Endothelial cell of umbilical vein (primary cell): ENCODE measurements at regions of chr2 and their contacts with region 1.

Region 1: GRCh38 chr2:181585732-181586131 is 71.2 kb downstream of the CERKL start:
- DNase-seq: no peak
- H3K4me3 ChIP-seq: no peak overlapping the region
- H3K27ac ChIP-seq: no peak overlapping the region
- H3K4me1 ChIP-seq: no peaks in the 10 kb centered on the region
- H3K27me3 ChIP-seq: peaks cover 0 to 4% of the 10 kb centered on the region in 2 experiments
- CTCF ChIP-seq: no peak
- POLR2A ChIP-seq: no peak

Region 2: GRCh38 chr2:181573140-181573736 is 12.5 kb before region 1 on chr2:
- CTCF ChIA-PET with region 1: interaction called, 12 read pairs
- POLR2A ChIA-PET with region 1: no interaction called
- dilution Hi-C with region 1: no loop called
- intact Hi-C with region 1: no loop called
- DNase-seq: peak; percentile 38
- H3K4me3 ChIP-seq: no peak overlapping the region
- H3K27ac ChIP-seq: no peak overlapping the region
- H3K4me1 ChIP-seq: no peaks in the 10 kb centered on the region
- H3K27me3 ChIP-seq: peaks cover 4 to 12% of the 10 kb centered on the region in 2 experiments
- CTCF ChIP-seq: peak; percentile 18 to 31
- POLR2A ChIP-seq: no peak

Region 3: GRCh38 chr2:181742922-181743722 is 157.4 kb after region 1 on chr2:
- CTCF ChIA-PET with region 1: no interaction called
- POLR2A ChIA-PET with region 1: no interaction called
- dilution Hi-C with region 1: no loop called
- intact Hi-C with region 1: no loop called
- DNase-seq: peak; percentile 83
- H3K4me3 ChIP-seq: no peak overlapping the region
- H3K27ac ChIP-seq: peak overlapping the region; percentile 34
- H3K4me1 ChIP-seq: peaks cover 15% of the 10 kb centered on the region
- H3K27me3 ChIP-seq: no peaks in the 10 kb centered on the region
- CTCF ChIP-seq: peak; percentile 37 to 39
- POLR2A ChIP-seq: no peak

Region 4: GRCh38 chr2:181891966-181892798 is 306.4 kb after region 1 on chr2:
- CTCF ChIA-PET with region 1: no interaction called
- POLR2A ChIA-PET with region 1: no interaction called
- dilution Hi-C with region 1: no loop called
- intact Hi-C with region 1: no loop called
- DNase-seq: peak; percentile 82
- H3K4me3 ChIP-seq: peak overlapping the region; percentile 80 to 95 (median 92)
- H3K27ac ChIP-seq: peak overlapping the region; percentile 80
- H3K4me1 ChIP-seq: peaks cover 42% of the 10 kb centered on the region
- H3K27me3 ChIP-seq: no peaks in the 10 kb centered on the region
- CTCF ChIP-seq: peak in 1 of 2 donors; percentile 2
- POLR2A ChIP-seq: peak; percentile 35